Activated T-helper 1 cell treated with anti-CD3 and anti-CD28 coated beads, Interleukin-12 subunit alpha, Interleukin-12 subunit beta, Interleukin-2, Interleukin-4 antibody, amounts not matched to agents 30 ng/mL and 10 ng/mL and 1 ng/mL, durations not matched to agents 14 hours and 24 hours and 36 hours (primary cell): ENCODE measurements at regions of chr7 and their contacts with region 1.

Region 1: GRCh38 chr7:105429746-105430612 is 41.3 kb upstream of the SRPK2 start:
- DNase-seq: peak; percentile 19
- H3K4me3 Mint-ChIP-seq: no peak overlapping the region
- H3K27ac Mint-ChIP-seq: no peak overlapping the region
- H3K4me1 Mint-ChIP-seq: peaks cover 12% of the 10 kb centered on the region
- H3K27me3 Mint-ChIP-seq: no peaks in the 10 kb centered on the region

Region 2: DNA sequence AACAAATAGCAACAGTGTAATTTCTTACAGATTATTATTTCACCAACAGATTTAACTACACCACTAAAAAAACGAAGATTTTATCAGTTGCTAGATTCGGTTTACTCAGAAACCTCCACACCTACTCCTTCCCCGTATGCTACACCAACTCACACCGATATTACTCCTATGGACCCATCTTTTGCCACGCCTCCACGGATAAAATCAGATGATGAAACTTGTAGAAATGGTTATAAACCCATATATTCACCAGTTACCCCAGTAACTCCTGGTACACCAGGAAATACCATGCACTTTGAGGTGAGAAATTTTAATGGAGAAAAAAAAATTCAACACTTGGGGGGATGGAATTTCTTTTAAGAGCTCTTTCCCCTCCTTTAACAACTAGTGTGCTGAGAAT is 323.5 kb before region 1 on chr7:
- intact Hi-C with region 1: loop called (anchors 5 kb)
- DNase-seq: no peak
- H3K4me3 Mint-ChIP-seq: no peak overlapping the region
- H3K27ac Mint-ChIP-seq: peak overlapping the region; percentile 28
- H3K4me1 Mint-ChIP-seq: peaks cover 11% of the 10 kb centered on the region
- H3K27me3 Mint-ChIP-seq: no peaks in the 10 kb centered on the region

Region 3: DNA sequence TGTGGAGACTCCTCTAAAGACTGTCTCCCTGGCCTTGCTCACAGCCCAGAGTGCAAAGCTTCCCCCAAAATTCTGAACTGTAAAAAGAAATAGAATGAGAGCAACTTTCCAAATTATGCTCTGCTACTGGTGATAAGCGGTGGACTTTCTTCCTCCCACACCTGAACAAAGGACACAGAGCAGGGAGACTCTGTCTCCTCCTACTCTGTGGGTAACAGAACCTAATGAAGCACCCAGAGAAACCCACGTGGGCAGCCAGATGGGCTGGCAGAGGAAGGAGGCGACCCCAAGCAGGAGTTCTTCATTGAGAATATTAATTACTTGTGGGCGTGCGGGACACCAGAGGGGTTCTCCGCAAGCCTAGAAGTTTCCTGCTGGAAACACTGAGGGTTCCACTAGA is 276.4 kb before region 1 on chr7:
- intact Hi-C with region 1: loop called (anchors 1 kb)
- DNase-seq: no peak
- H3K4me3 Mint-ChIP-seq: no peak overlapping the region
- H3K27ac Mint-ChIP-seq: no peak overlapping the region
- H3K4me1 Mint-ChIP-seq: peaks cover 17% of the 10 kb centered on the region
- H3K27me3 Mint-ChIP-seq: no peaks in the 10 kb centered on the region

Region 4: DNA sequence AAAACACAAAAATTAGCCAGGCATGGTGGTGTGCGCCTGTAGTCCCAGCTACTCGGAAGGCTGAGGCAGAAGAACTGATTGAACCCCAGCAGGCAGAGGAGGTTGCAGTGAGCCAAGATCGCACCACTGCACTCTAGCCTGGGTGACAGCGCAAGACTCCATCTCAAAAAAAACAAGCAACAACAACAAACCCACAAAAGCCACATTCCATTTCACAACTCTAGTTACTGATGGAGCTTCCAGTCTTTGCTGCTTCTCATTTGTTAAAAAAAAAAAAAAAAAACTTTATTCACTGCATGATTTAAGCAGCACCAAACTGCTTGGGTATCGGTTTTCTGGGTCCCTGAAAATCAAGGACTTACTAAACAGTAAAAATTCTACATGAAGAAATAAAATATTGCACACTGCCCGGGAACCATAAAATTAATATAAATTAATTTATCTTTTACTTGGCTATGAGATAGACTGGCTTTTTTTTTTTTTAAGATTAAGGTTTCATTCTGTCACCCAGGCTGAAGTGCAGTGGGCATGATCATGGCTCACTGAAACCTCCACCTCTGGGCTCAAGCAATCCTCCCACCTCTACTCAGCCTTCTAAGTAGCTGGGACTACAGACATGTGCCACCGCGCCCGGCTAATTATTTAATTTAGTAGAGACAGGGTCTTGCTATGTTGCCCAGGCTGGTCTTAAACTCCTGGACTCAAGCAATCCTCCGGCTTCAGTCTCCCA is 83.2 kb before region 1 on chr7:
- intact Hi-C with region 1: loop called (anchors 2 kb)
- DNase-seq: peak; percentile 35
- H3K4me3 Mint-ChIP-seq: peak overlapping the region; percentile 42
- H3K27ac Mint-ChIP-seq: peak overlapping the region; percentile 52
- H3K4me1 Mint-ChIP-seq: peaks cover 40% of the 10 kb centered on the region
- H3K27me3 Mint-ChIP-seq: no peaks in the 10 kb centered on the region

Region 5: DNA sequence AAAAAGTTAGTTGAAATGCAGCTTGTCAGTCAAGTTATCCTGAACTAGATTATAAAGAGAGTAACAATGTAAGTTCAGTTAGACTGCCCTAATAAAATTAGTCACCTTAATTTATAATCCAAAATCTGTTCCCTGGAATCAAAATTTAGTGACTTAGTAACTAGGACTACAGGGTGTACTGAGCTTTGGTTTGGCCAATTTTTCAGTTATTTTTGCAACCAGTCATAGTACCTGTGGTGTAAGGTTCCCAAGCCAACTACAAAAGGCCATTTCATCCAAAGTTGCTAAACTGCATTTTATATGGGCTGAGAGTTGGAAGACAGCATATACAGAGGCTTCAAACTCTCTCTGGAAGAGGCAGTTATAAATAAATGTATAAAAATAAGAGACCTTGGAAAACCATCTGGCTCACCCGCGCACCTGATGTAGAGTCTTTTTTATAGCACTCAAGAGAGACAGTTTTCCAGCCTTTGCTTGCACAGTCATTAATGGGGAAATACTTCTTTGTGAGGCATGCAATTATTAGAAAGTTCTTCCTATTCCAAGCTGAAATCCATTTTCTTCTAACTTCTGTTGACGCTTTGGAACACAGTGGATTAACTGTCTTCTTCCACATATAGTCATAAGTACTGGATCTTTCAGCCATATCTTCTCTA is 32.9 kb after region 1 on chr7:
- intact Hi-C with region 1: no loop called
- DNase-seq: no peak
- H3K4me3 Mint-ChIP-seq: no peak overlapping the region
- H3K27ac Mint-ChIP-seq: no peak overlapping the region
- H3K4me1 Mint-ChIP-seq: no peaks in the 10 kb centered on the region
- H3K27me3 Mint-ChIP-seq: no peaks in the 10 kb centered on the region